ENCODE measurements at regions of chr12 and their contacts with region 1.

Region 1: DNA sequence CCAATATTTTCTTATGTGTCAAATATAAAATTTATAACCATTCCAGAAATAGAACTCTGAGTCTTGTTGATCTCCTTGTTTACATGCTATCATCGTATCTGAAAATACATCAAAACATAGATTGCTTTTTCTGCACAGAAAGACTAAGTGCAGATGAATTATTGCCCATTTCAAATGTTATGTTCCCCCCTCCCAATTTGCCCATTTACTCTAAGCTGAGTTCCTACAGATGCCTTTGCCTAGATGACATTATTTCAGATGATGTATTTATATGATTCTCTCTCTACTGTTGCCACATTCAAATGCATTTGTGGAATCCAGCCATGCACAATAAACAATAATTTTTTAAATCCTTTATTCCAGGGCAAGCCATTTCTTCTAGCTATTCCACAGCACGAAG is 810.1 kb upstream of the MGAT4C start:
- DNase-seq: no peak
- ATAC-seq: no peak
- H3K4me3 ChIP-seq: no peak overlapping the region
- H3K27ac ChIP-seq: no peak overlapping the region
- H3K4me1 ChIP-seq: no peaks in the 10 kb centered on the region
- H3K27me3 ChIP-seq: no peaks in the 10 kb centered on the region
- CTCF ChIP-seq: no peak

Region 2: DNA sequence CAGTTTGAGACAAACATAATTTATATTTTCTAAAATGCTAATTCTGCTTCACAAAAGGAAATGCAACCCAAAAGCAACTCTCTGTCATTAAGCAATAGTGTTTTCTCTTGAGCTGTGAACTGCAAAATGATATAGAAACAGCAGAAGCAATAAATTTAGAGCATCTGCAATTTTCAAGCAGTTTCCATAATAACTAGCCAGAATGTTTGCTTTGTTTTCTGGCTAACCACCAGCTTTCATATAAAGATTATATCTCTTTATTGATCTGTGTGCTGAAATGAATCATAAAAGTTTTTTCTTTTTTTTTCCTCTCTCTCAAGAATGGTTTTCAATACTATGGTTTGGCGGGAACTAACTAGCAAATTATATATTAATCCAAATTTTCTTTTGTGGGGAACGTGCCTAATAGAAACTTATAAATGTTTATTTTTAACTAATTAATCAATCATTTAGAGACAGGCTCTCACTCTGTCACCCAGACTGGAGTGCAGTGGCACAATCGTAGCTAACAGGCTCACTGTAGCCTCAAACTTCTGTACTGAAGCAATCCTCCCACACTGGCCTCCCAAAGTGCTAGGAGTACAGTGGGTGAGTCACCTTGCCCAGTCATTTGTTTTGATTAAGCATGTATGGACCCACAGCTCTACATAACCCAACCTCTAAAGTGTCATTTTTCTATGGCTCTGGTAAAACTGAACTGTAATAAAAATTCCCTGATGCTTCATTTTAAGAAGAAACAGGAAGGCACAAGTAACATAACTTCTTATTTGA is 20.0 kb after region 1 on chr12:
- CTCF ChIA-PET with region 1: no interaction called
- POLR2A ChIA-PET with region 1: no interaction called
- intact Hi-C with region 1: loop called (anchors 2 kb)
- DNase-seq: peak; percentile 79
- ATAC-seq: peak; percentile 98
- H3K4me3 ChIP-seq: no peak overlapping the region
- H3K27ac ChIP-seq: peak overlapping the region; percentile 79
- H3K4me1 ChIP-seq: peaks cover 21% of the 10 kb centered on the region
- H3K27me3 ChIP-seq: no peaks in the 10 kb centered on the region
- CTCF ChIP-seq: no peak

Region 3: GRCh38 chr12:87116780-87117179 is 50.5 kb after region 1 on chr12:
- CTCF ChIA-PET with region 1: no interaction called
- POLR2A ChIA-PET with region 1: no interaction called
- intact Hi-C with region 1: no loop called
- DNase-seq: no peak
- ATAC-seq: no peak
- H3K4me3 ChIP-seq: no peak overlapping the region
- H3K27ac ChIP-seq: no peak overlapping the region
- H3K4me1 ChIP-seq: peaks cover 26% of the 10 kb centered on the region
- H3K27me3 ChIP-seq: no peaks in the 10 kb centered on the region
- CTCF ChIP-seq: no peak

Region 4: DNA sequence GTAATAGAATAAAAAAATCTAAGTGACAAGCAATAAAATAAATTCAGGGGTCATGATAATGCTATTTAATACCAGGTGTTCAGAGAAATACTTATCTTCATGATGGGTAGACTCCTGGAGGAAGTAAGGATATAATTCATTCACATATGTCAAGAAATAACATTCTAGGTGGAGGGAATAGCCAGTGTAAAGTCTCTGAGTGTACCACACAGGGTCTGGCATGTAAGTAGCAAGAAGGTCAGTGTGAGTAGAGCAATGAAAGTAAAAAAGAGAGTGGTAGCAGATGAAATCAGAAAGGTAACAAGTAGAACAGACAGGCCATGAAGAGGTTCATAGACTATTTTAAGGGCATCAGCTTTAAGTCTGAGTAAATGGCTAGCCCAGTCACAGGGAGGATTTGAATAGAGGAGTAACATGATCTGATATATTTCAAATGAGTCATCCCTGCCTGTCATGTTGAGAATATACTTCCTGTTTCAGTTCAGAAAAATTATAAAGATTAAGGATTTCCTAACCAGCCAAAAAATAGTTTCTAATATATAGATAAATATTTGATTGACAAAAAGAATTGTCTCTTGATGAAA is 443.0 kb after region 1 on chr12:
- CTCF ChIA-PET with region 1: no interaction called
- POLR2A ChIA-PET with region 1: no interaction called
- intact Hi-C with region 1: no loop called
- DNase-seq: peak; percentile 82
- ATAC-seq: peak; percentile 97
- H3K4me3 ChIP-seq: no peak overlapping the region
- H3K27ac ChIP-seq: peak overlapping the region; percentile 10; the same call in 1 of the 2 replicates
- H3K4me1 ChIP-seq: peaks cover 20% of the 10 kb centered on the region
- H3K27me3 ChIP-seq: no peaks in the 10 kb centered on the region
- CTCF ChIP-seq: no peak

Measured in PC-3 (cell line).